Naive thymus-derived CD4-positive, alpha-beta T cell (primary cell): ENCODE measurements at regions of chr2 and their contacts with region 1.

Region 1: GRCh38 chr2:159516241-159516766 is 100.0 kb downstream of the BAZ2B start:
- DNase-seq: peak in 7 of 9 donors; percentile 46 to 74 (median 55)
- ATAC-seq: peak; percentile 97
- H3K4me3 ChIP-seq: peak overlapping the region; percentile 71
- H3K4me3 Mint-ChIP-seq: peak overlapping the region; percentile 77 to 94 (median 86)
- H3K27ac ChIP-seq: peak overlapping the region; percentile 71
- H3K27ac Mint-ChIP-seq: peak overlapping the region; percentile 58 to 96 (median 93)
- H3K4me1 ChIP-seq: peaks cover 11 to 27% of the 10 kb centered on the region in 2 donors
- H3K4me1 Mint-ChIP-seq: peaks cover 9 to 40% (median 28%) of the 10 kb centered on the region in 7 donors
- H3K27me3 ChIP-seq: no peaks in the 10 kb centered on the region
- H3K27me3 Mint-ChIP-seq: no peaks in the 10 kb centered on the region

Region 2: GRCh38 chr2:159286709-159287441 is 229.4 kb before region 1 on chr2:
- CTCF ChIA-PET with region 1: no interaction called
- POLR2A ChIA-PET with region 1: no interaction called
- intact Hi-C with region 1: loop called (anchors 5 to 10 kb)
- DNase-seq: peak; percentile 89 to 97 (median 94)
- ATAC-seq: peak; percentile 99
- H3K4me3 ChIP-seq: peak overlapping the region; percentile 72
- H3K4me3 Mint-ChIP-seq: peak overlapping the region; percentile 80 to 92 (median 89)
- H3K27ac ChIP-seq: peak overlapping the region; percentile 77
- H3K27ac Mint-ChIP-seq: peak overlapping the region; percentile 64 to 97 (median 85)
- H3K4me1 ChIP-seq: peaks cover 8 to 13% of the 10 kb centered on the region in 2 donors
- H3K4me1 Mint-ChIP-seq: peaks cover 15 to 36% (median 31%) of the 10 kb centered on the region in 7 donors
- H3K27me3 ChIP-seq: no peaks in the 10 kb centered on the region
- H3K27me3 Mint-ChIP-seq: no peaks in the 10 kb centered on the region

Region 3: GRCh38 chr2:159362816-159363251 is 153.5 kb before region 1 on chr2:
- CTCF ChIA-PET with region 1: no interaction called
- POLR2A ChIA-PET with region 1: no interaction called
- intact Hi-C with region 1: no loop called
- DNase-seq: no peak
- ATAC-seq: peak; percentile 90
- H3K4me3 ChIP-seq: no peak overlapping the region
- H3K4me3 Mint-ChIP-seq: no peak overlapping the region
- H3K27ac ChIP-seq: no peak overlapping the region
- H3K27ac Mint-ChIP-seq: no peak overlapping the region
- H3K4me1 ChIP-seq: no peaks in the 10 kb centered on the region
- H3K4me1 Mint-ChIP-seq: peaks cover 0 to 10% (median 0%) of the 10 kb centered on the region in 7 donors
- H3K27me3 ChIP-seq: no peaks in the 10 kb centered on the region
- H3K27me3 Mint-ChIP-seq: no peaks in the 10 kb centered on the region

Region 4: GRCh38 chr2:159456491-159457426 is 59.5 kb before region 1 on chr2:
- CTCF ChIA-PET with region 1: no interaction called
- POLR2A ChIA-PET with region 1: no interaction called
- intact Hi-C with region 1: loop called in 1 of 2 experiments (anchors 5 kb)
- DNase-seq: no peak
- ATAC-seq: peak; percentile 40
- H3K4me3 ChIP-seq: no peak overlapping the region
- H3K4me3 Mint-ChIP-seq: peak overlapping the region in 3 of 10 donors; percentile 15 to 31 (median 22)
- H3K27ac ChIP-seq: no peak overlapping the region
- H3K27ac Mint-ChIP-seq: no peak overlapping the region
- H3K4me1 ChIP-seq: peaks cover 0 to 7% of the 10 kb centered on the region in 2 donors
- H3K4me1 Mint-ChIP-seq: peaks cover 8 to 32% (median 26%) of the 10 kb centered on the region in 7 donors
- H3K27me3 ChIP-seq: no peaks in the 10 kb centered on the region
- H3K27me3 Mint-ChIP-seq: no peaks in the 10 kb centered on the region

Region 5: GRCh38 chr2:159484532-159484931 is 31.8 kb before region 1 on chr2:
- CTCF ChIA-PET with region 1: no interaction called
- POLR2A ChIA-PET with region 1: no interaction called
- intact Hi-C with region 1: no loop called
- DNase-seq: no peak
- ATAC-seq: no peak
- H3K4me3 ChIP-seq: no peak overlapping the region
- H3K4me3 Mint-ChIP-seq: no peak overlapping the region
- H3K27ac ChIP-seq: no peak overlapping the region
- H3K27ac Mint-ChIP-seq: no peak overlapping the region
- H3K4me1 ChIP-seq: no peaks in the 10 kb centered on the region
- H3K4me1 Mint-ChIP-seq: peaks cover 0 to 5% (median 0%) of the 10 kb centered on the region in 7 donors
- H3K27me3 ChIP-seq: no peaks in the 10 kb centered on the region
- H3K27me3 Mint-ChIP-seq: no peaks in the 10 kb centered on the region

Region 6: GRCh38 chr2:159615140-159615951 is 99.0 kb after region 1 on chr2:
- CTCF ChIA-PET with region 1: no interaction called
- POLR2A ChIA-PET with region 1: no interaction called
- intact Hi-C with region 1: loop called in 1 of 2 experiments (anchors 2 kb)
- DNase-seq: peak in 8 of 9 donors; percentile 7 to 51 (median 22)
- ATAC-seq: peak; percentile 78
- H3K4me3 ChIP-seq: peak overlapping the region; percentile 58
- H3K4me3 Mint-ChIP-seq: peak overlapping the region; percentile 81 to 99 (median 89)
- H3K27ac ChIP-seq: peak overlapping the region; percentile 30
- H3K27ac Mint-ChIP-seq: peak overlapping the region in 2 of 9 donors; percentile 32 to 57
- H3K4me1 ChIP-seq: peaks cover 4 to 5% of the 10 kb centered on the region in 2 donors
- H3K4me1 Mint-ChIP-seq: peaks cover 10 to 18% (median 15%) of the 10 kb centered on the region in 7 donors
- H3K27me3 ChIP-seq: peaks cover 3% of the 10 kb centered on the region in 2 donors
- H3K27me3 Mint-ChIP-seq: peaks cover 17 to 50% (median 41%) of the 10 kb centered on the region in 5 donors

Region 7: GRCh38 chr2:159807183-159808031 is 291.1 kb after region 1 on chr2:
- CTCF ChIA-PET with region 1: no interaction called
- POLR2A ChIA-PET with region 1: no interaction called
- intact Hi-C with region 1: loop called in 1 of 2 experiments (anchors 5 kb)
- DNase-seq: no peak
- ATAC-seq: peak; percentile 55
- H3K4me3 ChIP-seq: no peak overlapping the region
- H3K4me3 Mint-ChIP-seq: no peak overlapping the region
- H3K27ac ChIP-seq: no peak overlapping the region
- H3K27ac Mint-ChIP-seq: no peak overlapping the region
- H3K4me1 ChIP-seq: no peaks in the 10 kb centered on the region
- H3K4me1 Mint-ChIP-seq: peaks cover 0 to 4% (median 0%) of the 10 kb centered on the region in 7 donors
- H3K27me3 ChIP-seq: no peaks in the 10 kb centered on the region
- H3K27me3 Mint-ChIP-seq: no peaks in the 10 kb centered on the region